Right cardiac atrium (tissue), 5 donors: ENCODE measurements at regions of chr9 and their contacts with region 1.

Region 1: GRCh38 chr9:967903-968641 is 8.4 kb upstream of the DMRT3 start:
- DNase-seq: no peak
- ATAC-seq: no peak
- H3K4me3 ChIP-seq: no peak overlapping the region
- H3K27ac ChIP-seq: no peak overlapping the region
- H3K4me1 ChIP-seq: peaks cover 3% of the 10 kb centered on the region
- H3K27me3 ChIP-seq: peaks cover 1% of the 10 kb centered on the region

Region 2: DNA sequence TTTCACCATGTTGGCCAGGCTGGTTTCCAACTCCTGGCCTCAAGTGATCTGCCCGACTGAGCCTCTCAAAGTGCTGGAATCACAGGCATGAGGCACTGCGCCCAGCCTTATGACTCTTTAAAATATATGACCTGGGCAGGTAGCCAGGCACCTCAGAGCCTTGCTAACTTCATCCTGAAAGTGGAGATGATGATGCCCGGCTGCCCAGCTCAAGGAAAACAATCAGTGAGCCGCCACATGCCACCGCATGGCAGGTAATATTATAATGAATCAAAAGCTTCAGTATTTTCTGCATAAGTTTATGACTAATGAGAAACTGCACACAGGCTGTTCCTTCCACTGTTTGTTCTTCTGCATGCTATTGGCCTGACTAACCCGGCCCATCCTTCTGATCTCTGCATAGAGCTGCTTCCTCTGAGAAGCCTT is 157.0 kb before region 1 on chr9:
- intact Hi-C with region 1: no loop called
- DNase-seq: no peak
- ATAC-seq: no peak
- H3K4me3 ChIP-seq: no peak overlapping the region
- H3K27ac ChIP-seq: no peak overlapping the region
- H3K4me1 ChIP-seq: no peaks in the 10 kb centered on the region
- H3K27me3 ChIP-seq: no peaks in the 10 kb centered on the region

Region 3: DNA sequence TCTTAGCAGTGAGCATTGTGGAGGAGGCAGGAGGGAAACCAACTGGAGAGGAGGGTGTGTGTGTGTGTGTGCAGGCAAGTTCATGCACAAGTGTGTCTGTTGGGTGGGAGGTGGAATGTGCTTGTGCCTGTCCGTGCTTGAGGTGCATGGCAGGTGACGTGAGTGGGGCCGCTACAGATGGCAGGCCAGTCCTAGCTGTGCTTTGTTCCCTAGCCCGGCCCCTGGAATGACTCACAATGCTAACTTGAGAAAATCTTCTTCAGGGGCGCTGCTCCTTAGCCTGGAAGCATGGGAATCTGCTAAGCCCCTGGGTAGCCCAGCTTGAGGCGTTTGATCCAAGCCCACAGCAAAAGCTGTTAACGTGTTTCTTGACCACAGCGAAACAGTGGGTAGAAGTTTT is 57.1 kb after region 1 on chr9:
- intact Hi-C with region 1: loop called in 1 of 4 experiments (anchors 10 kb)
- DNase-seq: no peak
- ATAC-seq: no peak
- H3K4me3 ChIP-seq: no peak overlapping the region
- H3K27ac ChIP-seq: no peak overlapping the region
- H3K4me1 ChIP-seq: no peaks in the 10 kb centered on the region
- H3K27me3 ChIP-seq: no peaks in the 10 kb centered on the region

Region 4: GRCh38 chr9:1248743-1249142 is 280.7 kb after region 1 on chr9:
- intact Hi-C with region 1: no loop called
- DNase-seq: no peak
- ATAC-seq: no peak
- H3K4me3 ChIP-seq: no peak overlapping the region
- H3K27ac ChIP-seq: no peak overlapping the region
- H3K4me1 ChIP-seq: no peaks in the 10 kb centered on the region
- H3K27me3 ChIP-seq: no peaks in the 10 kb centered on the region

Region 5: DNA sequence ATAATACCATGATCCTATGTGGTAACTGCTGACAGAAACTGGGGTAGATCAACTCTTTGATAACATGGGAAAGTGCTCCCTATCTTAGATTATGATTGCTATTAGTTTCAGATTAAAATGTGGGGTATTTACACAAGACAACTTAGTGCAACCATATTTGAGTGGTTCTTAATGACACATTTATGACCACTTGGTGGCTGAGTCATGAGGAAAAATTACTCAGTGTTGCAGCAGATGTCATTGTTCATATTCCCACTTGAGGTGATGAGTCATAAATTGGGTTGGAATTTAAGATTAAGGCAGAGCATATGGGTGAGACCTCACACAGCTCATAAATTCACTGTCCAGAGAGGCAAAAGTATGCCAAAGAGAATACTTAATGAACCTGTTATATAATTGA is 490.4 kb after region 1 on chr9:
- intact Hi-C with region 1: no loop called
- DNase-seq: no peak
- ATAC-seq: no peak
- H3K4me3 ChIP-seq: no peak overlapping the region
- H3K27ac ChIP-seq: no peak overlapping the region
- H3K4me1 ChIP-seq: no peaks in the 10 kb centered on the region
- H3K27me3 ChIP-seq: no peaks in the 10 kb centered on the region

Region 6: DNA sequence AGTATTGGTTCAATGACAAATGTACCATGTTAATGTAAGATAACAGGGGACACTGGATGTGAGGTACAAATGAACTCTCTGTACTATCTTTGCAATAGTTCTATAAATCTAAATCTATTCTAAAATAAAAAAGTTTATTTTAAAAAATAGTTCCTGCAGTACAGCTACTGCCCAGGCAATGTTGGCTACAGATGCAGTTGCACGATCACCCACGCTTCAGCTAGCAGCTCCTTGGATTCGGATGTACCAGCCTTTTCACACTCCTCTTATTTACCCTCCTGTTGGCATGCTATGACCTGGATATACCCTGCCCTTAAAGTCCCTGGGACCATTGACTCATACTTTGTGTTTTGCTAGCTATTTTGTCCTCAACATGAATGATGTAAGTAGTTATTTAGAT is 861.6 kb after region 1 on chr9:
- intact Hi-C with region 1: no loop called
- DNase-seq: no peak
- ATAC-seq: no peak
- H3K4me3 ChIP-seq: no peak overlapping the region
- H3K27ac ChIP-seq: no peak overlapping the region
- H3K4me1 ChIP-seq: no peaks in the 10 kb centered on the region
- H3K27me3 ChIP-seq: no peaks in the 10 kb centered on the region